ENCODE measurements at regions of chr2 and their contacts with region 1.

Region 1: DNA sequence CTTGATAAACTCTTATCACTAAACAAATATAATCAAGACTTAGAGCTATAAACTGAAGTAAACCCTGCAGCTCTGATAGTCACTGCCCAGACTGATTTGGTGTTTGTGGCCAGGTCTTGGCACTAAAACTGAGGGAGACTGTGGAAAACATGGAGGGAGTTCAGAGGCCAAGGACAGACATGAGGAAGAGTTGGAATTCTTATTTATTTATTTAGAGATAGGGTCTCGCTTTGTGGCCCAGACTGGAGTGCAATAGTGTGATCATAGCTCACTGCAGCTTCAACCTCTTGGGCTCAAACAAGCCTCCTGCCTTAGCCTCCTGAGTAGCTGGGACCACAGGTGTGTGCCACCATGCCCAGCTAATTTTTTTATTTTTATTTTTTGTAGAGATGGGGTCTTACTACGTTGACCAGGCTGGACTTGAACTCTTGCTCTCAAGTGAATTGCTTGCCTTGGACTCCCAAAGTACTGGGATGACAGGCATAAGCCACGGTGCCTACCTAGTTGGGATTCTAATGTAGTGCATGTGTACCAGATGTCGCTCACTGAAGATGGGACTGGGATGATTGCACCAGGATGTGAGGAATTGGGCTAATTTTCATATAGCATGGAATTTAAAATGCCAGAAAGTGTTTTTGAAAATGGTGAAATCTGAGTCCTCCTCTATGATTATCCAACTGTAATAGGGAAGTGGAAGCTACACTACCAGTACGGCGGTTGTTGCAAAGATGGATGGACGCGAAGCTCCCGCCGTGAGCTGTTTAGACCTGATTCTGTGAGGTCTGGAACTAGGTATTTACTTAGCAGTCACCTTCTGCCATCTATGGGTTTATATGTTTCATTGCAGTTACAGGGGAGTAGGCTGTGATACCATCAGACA is 52.7 kb upstream of the CTLA4 start:
- DNase-seq: peak in 1 of 2 experiments; percentile 3
- H3K4me3 ChIP-seq: no peak overlapping the region
- H3K27ac ChIP-seq: no peak overlapping the region
- H3K4me1 ChIP-seq: peaks cover 16% of the 10 kb centered on the region
- H3K27me3 ChIP-seq: no peaks in the 10 kb centered on the region
- CTCF ChIP-seq: peak; percentile 68

Region 2: GRCh38 chr2:202831242-202832220 is 983.4 kb before region 1 on chr2:
- CTCF ChIA-PET with region 1: no interaction called
- POLR2A ChIA-PET with region 1: no interaction called
- intact Hi-C with region 1: loop called (anchors 10 kb)
- DNase-seq: peak; percentile 29 to 47
- H3K4me3 ChIP-seq: no peak overlapping the region
- H3K27ac ChIP-seq: no peak overlapping the region
- H3K4me1 ChIP-seq: 0 out of 2 replicates have a peak, but pooled peaks cover 5% of the 10 kb centered on the region
- H3K27me3 ChIP-seq: no peaks in the 10 kb centered on the region
- CTCF ChIP-seq: peak; percentile 63

Region 3: DNA sequence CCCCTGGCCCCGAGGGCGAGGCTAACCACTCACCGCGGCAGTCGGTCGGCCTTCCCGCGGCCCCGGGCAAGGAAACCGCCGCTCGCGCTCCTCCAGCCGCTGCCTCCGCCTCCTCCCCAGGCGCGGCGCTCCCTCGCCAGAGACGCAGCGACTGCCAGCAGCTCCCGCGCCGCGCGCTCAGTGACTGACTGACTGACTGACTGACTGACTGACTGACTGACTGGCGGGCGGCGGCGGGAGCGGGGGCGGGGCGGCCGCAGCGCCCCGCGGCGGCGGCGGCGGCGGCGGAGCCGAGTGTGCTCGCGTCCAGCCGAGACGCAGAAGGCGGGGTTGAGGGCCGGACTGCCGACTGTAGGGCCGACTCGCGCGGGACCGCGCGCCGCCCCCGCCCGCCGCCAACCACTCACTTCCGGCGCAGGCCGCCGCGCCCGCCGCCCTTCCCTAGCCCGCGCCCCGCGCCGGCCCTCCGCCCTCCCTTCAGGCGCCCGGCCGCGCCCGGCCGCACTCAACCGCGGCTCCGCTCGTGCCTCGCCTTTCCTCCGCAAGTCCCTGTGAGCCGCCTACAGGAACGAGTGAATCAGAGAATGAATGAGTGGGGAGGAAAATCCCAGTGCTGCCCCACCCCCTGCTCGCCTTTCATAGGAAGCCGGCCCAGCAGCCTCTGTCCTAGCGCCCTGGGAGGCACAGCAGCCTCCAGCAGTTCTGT is 279.7 kb before region 1 on chr2 and contains the start of gene RAPH1:
- CTCF ChIA-PET with region 1: no interaction called
- POLR2A ChIA-PET with region 1: no interaction called
- intact Hi-C with region 1: loop called (anchors 1 kb)
- DNase-seq: peak; percentile 58 to 69
- H3K4me3 ChIP-seq: peak within 1 kb of the TSS; percentile 79
- H3K27ac ChIP-seq: peak within 1 kb of the TSS; percentile 74
- H3K4me1 ChIP-seq: peaks cover 24% of the 10 kb centered on the region
- H3K27me3 ChIP-seq: no peaks in the 10 kb centered on the region
- CTCF ChIP-seq: no peak
- total RNA-seq, gene RAPH1: 16.5 and 16.8 TPM in 2 replicates

Region 4: GRCh38 chr2:203683932-203684556 is 130.9 kb before region 1 on chr2:
- CTCF ChIA-PET with region 1: no interaction called
- POLR2A ChIA-PET with region 1: no interaction called
- intact Hi-C with region 1: loop called (anchors 5 kb)
- DNase-seq: peak; percentile 35 to 79
- H3K4me3 ChIP-seq: no peak overlapping the region
- H3K27ac ChIP-seq: peak overlapping the region; percentile 87
- H3K4me1 ChIP-seq: peaks cover 25% of the 10 kb centered on the region
- H3K27me3 ChIP-seq: no peaks in the 10 kb centered on the region
- CTCF ChIP-seq: no peak

Region 5: DNA sequence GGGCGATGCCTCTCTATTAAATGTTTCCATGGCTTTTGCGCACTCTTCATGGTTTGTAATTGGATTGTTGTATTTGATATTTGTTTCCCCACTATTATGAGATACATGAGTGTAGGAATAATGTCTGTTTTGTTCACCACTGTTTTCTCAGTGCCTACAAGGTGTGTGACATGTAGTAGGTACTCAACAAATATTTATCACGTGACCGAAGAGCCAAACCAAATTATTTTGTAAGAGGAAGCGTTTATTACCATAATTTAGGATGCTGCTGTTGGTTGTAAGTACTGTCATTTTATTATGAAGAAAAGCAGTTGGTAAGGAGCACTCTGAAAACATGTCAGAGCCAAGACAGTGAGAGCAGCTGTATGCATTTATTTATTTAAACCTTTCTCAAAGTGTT is 20.5 kb after region 1 on chr2:
- CTCF ChIA-PET with region 1: no interaction called
- POLR2A ChIA-PET with region 1: interaction called, 10 read pairs
- intact Hi-C with region 1: no loop called
- DNase-seq: no peak
- H3K4me3 ChIP-seq: no peak overlapping the region
- H3K27ac ChIP-seq: no peak overlapping the region
- H3K4me1 ChIP-seq: no peaks in the 10 kb centered on the region
- H3K27me3 ChIP-seq: no peaks in the 10 kb centered on the region
- CTCF ChIP-seq: no peak